Ovary (tissue), 10 donors: ENCODE measurements at regions of chr19 and their contacts with region 1.

Region 1: GRCh38 chr19:16247353-16248182 is 49.9 kb downstream of the AP1M1 start:
- DNase-seq: peak; percentile 83 to 93 (median 92)
- H3K4me3 ChIP-seq: no peak overlapping the region
- H3K27ac ChIP-seq: no peak overlapping the region
- H3K4me1 ChIP-seq: peaks cover 2% of the 10 kb centered on the region
- H3K27me3 ChIP-seq: no peaks in the 10 kb centered on the region
- CTCF ChIP-seq: peak; percentile 83 to 98 (median 98)
- EP300 ChIP-seq: no peak
- POLR2A ChIP-seq: peak; percentile 26

Region 2: GRCh38 chr19:15897738-15898276 is 349.8 kb before region 1 on chr19 and contains the start of gene CYP4F2:
- intact Hi-C with region 1: no loop called
- DNase-seq: no peak
- H3K4me3 ChIP-seq: no peak within 1 kb of the TSS
- H3K27ac ChIP-seq: no peak within 1 kb of the TSS
- H3K4me1 ChIP-seq: no peaks in the 10 kb centered on the region
- H3K27me3 ChIP-seq: no peaks in the 10 kb centered on the region
- CTCF ChIP-seq: no peak
- EP300 ChIP-seq: no peak
- POLR2A ChIP-seq: no peak
- total RNA-seq, gene CYP4F2: 0.75 to 1.1 TPM in 2 of 7 donors, not detected in the others

Region 3: DNA sequence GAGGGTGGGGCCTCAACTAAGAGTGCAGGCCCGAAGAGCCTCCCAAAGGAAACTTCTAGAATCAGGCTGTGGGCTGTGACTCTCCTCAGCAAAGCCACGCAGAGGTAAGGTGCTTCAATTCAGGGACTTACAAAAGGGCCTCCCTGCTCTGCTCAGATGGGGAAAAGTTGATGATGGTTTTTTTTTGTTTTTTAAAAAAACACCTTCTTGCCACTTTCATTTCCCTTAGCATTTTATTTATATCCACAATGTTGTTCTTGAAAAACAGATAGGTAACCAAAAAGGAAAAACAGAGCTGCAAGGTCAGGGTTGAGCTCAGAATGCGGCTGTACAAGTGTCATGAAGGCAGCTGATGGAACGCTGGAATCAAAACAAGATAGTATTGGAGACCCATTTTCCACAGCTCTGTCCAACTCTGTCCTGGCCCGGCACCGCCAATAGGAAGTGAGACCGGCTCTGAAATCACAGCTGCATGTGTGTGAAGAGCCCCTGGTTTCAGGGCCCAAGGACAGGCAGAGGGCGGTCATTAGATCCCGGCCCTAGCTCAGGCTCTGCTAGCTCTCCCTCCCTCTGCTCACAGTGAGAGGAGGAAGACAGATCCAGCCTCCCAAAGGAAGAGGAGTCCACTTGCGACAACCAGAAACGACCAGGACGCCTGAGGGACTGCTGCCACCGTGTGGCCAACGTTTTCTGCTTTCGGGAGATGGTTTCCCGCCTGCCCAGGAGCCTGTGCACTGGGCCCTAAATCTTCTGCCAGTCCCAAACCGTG is 135.4 kb after region 1 on chr19:
- intact Hi-C with region 1: loop called (anchors 1 to 2 kb)
- DNase-seq: peak; percentile 88 to 95 (median 91)
- H3K4me3 ChIP-seq: no peak overlapping the region
- H3K27ac ChIP-seq: peak overlapping the region; percentile 84 to 85
- H3K4me1 ChIP-seq: peaks cover 11% of the 10 kb centered on the region
- H3K27me3 ChIP-seq: no peaks in the 10 kb centered on the region
- CTCF ChIP-seq: peak; percentile 79 to 94 (median 92)
- EP300 ChIP-seq: no peak
- POLR2A ChIP-seq: peak; percentile 47